Natural killer cell (primary cell): ENCODE measurements at regions of chr14 and their contacts with region 1.

Region 1: DNA sequence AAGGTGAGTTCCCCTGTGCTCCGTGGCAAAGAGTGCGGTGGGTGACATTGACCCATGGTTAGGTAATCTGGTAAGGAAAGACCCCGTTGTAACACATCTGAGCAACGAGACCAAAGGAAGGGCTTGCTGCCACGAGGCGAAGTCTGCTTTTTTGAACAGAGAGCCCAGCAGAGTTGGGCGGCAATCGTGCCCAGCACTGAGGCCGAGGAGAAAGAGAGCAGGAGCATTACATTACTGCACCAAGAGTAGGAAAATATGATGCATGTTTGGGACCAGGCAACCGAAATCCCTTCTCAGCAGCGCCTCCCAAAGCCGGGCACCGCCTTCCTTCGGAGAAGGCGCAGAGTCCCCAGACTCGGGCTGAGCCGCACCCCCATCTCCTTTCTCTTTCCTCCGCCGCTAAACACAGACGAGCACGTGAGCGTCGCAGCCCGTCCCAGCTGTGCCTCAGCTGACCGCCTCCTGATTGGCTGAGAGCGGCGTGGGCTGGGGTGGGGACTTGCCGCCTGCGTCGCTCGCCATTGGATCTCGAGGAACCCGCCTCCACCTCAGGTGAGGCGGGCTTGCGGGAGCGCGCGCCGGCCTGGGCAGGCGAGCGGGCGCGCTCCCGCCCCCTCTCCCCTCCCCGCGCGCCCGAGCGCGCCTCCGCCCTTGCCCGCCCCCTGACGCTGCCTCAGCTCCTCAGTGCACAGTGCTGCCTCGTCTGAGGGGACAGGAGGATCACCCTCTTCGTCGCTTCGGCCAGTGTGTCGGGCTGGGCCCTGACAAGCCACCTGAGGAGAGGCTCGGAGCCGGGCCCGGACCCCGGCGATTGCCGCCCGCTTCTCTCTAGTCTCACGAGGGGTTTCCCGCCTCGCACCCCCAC is at the start of gene HIF1A:
- DNase-seq: peak; percentile 92 to 99
- ATAC-seq: peak; percentile 93 to 99 (median 96)
- H3K4me3 ChIP-seq: peak within 1 kb of the TSS; percentile 99
- H3K4me3 Mint-ChIP-seq: peak within 1 kb of the TSS; percentile 97
- H3K27ac ChIP-seq: peak within 1 kb of the TSS; percentile 95
- H3K27ac Mint-ChIP-seq: peak within 1 kb of the TSS; percentile 95 to 97
- H3K4me1 ChIP-seq: peaks cover 4% of the 10 kb centered on the region
- H3K4me1 Mint-ChIP-seq: peaks cover 44 to 47% of the 10 kb centered on the region in 2 donors
- H3K27me3 ChIP-seq: no peaks in the 10 kb centered on the region
- H3K27me3 Mint-ChIP-seq: peaks cover 9 to 14% of the 10 kb centered on the region in 2 donors
- CTCF ChIP-seq: no peak
- total RNA-seq, gene HIF1A: 174 to 184 (median 177) TPM

Region 2: DNA sequence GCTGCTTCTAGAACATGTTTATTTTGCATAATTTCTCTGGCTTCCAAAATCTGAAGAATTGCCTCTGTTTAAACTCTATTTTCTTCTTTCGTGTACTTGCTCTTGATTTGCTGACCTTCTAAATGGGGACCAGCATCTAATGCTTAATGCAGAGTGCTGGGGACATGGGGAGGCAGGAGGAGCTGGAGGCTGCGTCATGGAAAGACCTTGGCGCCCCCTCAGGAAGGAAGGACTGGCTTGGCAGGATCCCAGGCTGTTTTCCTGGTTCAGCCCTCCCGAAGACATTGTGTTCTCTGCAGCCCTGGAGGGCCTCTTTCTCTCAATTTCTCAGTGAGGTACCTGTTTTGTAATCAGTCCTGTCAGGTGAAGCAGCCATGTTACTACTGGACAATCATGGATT is 368.2 kb before region 1 on chr14:
- intact Hi-C with region 1: loop called (anchors 5 kb)
- DNase-seq: peak in 1 of 2 donors; percentile 51
- ATAC-seq: no peak
- H3K4me3 ChIP-seq: peak overlapping the region; percentile 26
- H3K4me3 Mint-ChIP-seq: peak overlapping the region; percentile 95
- H3K27ac ChIP-seq: peak overlapping the region; percentile 83
- H3K27ac Mint-ChIP-seq: peak overlapping the region in 1 of 2 donors; percentile 99
- H3K4me1 ChIP-seq: peaks cover 48% of the 10 kb centered on the region
- H3K4me1 Mint-ChIP-seq: peaks cover 80 to 84% of the 10 kb centered on the region in 2 donors
- H3K27me3 ChIP-seq: no peaks in the 10 kb centered on the region
- H3K27me3 Mint-ChIP-seq: no peaks in the 10 kb centered on the region
- CTCF ChIP-seq: no peak

Region 3: DNA sequence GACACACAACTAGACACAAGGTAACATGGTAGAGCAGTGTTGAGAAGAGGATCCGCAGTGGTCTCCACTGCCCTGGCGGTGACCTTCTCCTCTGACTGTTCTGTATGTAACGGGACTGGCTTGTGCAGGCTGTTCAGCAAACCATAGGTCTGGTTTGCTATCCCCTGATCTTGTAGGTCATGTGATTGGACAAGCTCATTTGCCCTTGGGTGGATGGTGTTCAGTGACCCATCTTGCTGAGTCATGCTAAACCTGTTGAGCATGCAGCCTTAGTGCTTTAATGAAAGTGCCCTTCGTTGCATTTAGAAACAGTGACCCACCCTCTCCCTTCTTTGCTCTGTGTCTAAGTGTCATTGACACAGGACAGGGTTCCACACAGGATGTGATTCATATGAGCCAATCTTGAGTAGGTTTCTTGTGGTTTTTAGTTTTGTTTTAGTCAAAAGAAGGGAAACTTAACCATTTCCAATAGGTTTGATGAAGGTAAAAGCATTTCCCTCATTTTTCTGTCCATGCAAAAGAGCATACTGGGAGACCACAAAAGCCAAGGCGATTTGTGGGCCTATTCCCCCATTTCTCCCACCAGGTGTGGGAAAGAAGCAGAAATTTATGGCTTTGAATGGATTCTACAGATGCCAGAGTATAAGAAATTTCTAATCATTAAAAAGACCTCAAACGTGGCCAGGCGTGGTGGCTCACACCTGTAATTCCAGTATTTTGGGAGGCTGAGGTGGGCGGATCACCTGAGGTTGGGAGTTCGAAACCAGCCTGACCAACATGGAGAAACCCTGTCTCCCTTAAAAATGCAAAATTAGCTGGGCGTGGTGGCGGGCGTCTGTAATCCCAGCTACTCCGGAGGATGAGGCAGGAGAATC is 32.4 kb before region 1 on chr14:
- intact Hi-C with region 1: loop called (anchors 2 kb)
- DNase-seq: peak; percentile 40 to 82
- ATAC-seq: peak; percentile 88 to 96 (median 95)
- H3K4me3 ChIP-seq: no peak overlapping the region
- H3K4me3 Mint-ChIP-seq: peak overlapping the region; percentile 76
- H3K27ac ChIP-seq: peak overlapping the region; percentile 84
- H3K27ac Mint-ChIP-seq: peak overlapping the region; percentile 91 to 96
- H3K4me1 ChIP-seq: peaks cover 42% of the 10 kb centered on the region
- H3K4me1 Mint-ChIP-seq: peaks cover 49 to 56% of the 10 kb centered on the region in 2 donors
- H3K27me3 ChIP-seq: no peaks in the 10 kb centered on the region
- H3K27me3 Mint-ChIP-seq: no peaks in the 10 kb centered on the region
- CTCF ChIP-seq: no peak

Region 4: GRCh38 chr14:61671082-61671481 is 24.0 kb before region 1 on chr14:
- intact Hi-C with region 1: loop called (anchors 1 kb)
- DNase-seq: peak; percentile 23 to 84
- ATAC-seq: peak; percentile 92 to 96 (median 94)
- H3K4me3 ChIP-seq: no peak overlapping the region
- H3K4me3 Mint-ChIP-seq: no peak overlapping the region
- H3K27ac ChIP-seq: peak overlapping the region; percentile 99
- H3K27ac Mint-ChIP-seq: no peak overlapping the region
- H3K4me1 ChIP-seq: peaks cover 35% of the 10 kb centered on the region
- H3K4me1 Mint-ChIP-seq: peaks cover 4 to 6% of the 10 kb centered on the region in 2 donors
- H3K27me3 ChIP-seq: no peaks in the 10 kb centered on the region
- H3K27me3 Mint-ChIP-seq: no peaks in the 10 kb centered on the region
- CTCF ChIP-seq: no peak

Region 5: DNA sequence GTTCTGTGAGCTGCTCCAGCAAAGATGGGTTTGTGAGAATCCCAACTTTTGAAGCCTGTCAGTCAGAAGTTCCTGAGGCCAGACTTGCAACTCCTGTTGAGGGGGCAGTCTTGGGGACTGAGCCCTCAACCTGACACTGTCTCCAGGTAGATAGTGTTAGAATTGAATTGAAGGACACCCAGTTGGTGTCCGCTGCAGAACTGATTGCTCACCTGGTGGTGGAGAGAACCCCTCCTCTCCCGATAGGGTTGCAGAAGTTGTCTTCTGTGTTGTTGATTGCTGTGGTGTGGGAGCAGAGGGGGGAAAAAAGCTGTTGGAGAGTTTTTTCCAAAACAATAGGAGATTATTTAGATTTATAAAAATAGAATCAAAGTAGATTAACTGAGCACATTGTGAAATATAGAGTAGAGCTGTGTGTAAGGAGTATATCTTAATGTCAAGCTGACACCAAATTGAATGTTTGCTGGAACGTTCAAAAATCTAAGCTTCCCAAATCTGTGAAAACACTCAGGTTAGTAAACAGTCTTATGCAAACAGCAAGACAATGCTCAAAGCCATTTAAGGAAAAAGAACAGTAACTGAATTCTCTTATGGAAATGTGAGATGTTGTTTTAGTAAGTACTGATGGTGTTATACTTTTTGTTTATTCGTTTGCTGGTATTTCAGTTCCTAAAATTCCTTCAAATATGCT is 18.8 kb after region 1 on chr14:
- intact Hi-C with region 1: loop called (anchors 2 kb)
- DNase-seq: no peak
- ATAC-seq: no peak
- H3K4me3 ChIP-seq: no peak overlapping the region
- H3K4me3 Mint-ChIP-seq: no peak overlapping the region
- H3K27ac ChIP-seq: no peak overlapping the region
- H3K27ac Mint-ChIP-seq: no peak overlapping the region
- H3K4me1 ChIP-seq: peaks cover 21% of the 10 kb centered on the region
- H3K4me1 Mint-ChIP-seq: peaks cover 56 to 59% of the 10 kb centered on the region in 2 donors
- H3K27me3 ChIP-seq: no peaks in the 10 kb centered on the region
- H3K27me3 Mint-ChIP-seq: no peaks in the 10 kb centered on the region
- CTCF ChIP-seq: no peak

Region 6: GRCh38 chr14:61749867-61750266 is 54.8 kb after region 1 on chr14:
- intact Hi-C with region 1: loop called (anchors 10 kb)
- DNase-seq: no peak
- ATAC-seq: no peak
- H3K4me3 ChIP-seq: no peak overlapping the region
- H3K4me3 Mint-ChIP-seq: peak overlapping the region; percentile 90
- H3K27ac ChIP-seq: no peak overlapping the region
- H3K27ac Mint-ChIP-seq: peak overlapping the region in 1 of 2 donors; percentile 71
- H3K4me1 ChIP-seq: peaks cover 3% of the 10 kb centered on the region
- H3K4me1 Mint-ChIP-seq: peaks cover 6 to 9% of the 10 kb centered on the region in 2 donors
- H3K27me3 ChIP-seq: no peaks in the 10 kb centered on the region
- H3K27me3 Mint-ChIP-seq: peaks cover 2 to 6% of the 10 kb centered on the region in 2 donors
- CTCF ChIP-seq: no peak

Region 7: GRCh38 chr14:61761959-61762786 is 67.1 kb after region 1 on chr14 and contains the start of gene SNAPC1:
- intact Hi-C with region 1: loop called (anchors 1 kb)
- DNase-seq: peak; percentile 95 to 100
- ATAC-seq: peak; percentile 93 to 99 (median 96)
- H3K4me3 ChIP-seq: peak within 1 kb of the TSS; percentile 95
- H3K4me3 Mint-ChIP-seq: peak within 1 kb of the TSS; percentile 97
- H3K27ac ChIP-seq: peak within 1 kb of the TSS; percentile 96
- H3K27ac Mint-ChIP-seq: peak within 1 kb of the TSS; percentile 96 to 97
- H3K4me1 ChIP-seq: peaks cover 18% of the 10 kb centered on the region
- H3K4me1 Mint-ChIP-seq: peaks cover 25 to 37% of the 10 kb centered on the region in 2 donors
- H3K27me3 ChIP-seq: no peaks in the 10 kb centered on the region
- H3K27me3 Mint-ChIP-seq: peaks cover 9 to 10% of the 10 kb centered on the region in 2 donors
- CTCF ChIP-seq: no peak
- total RNA-seq, gene SNAPC1: 2.2 to 2.4 (median 2.2) TPM